AG04449 (cell line): ENCODE measurements at regions of chr6 and their contacts with region 1.

Region 1: GRCh38 chr6:71621918-71622519 is 264.3 kb upstream of the RIMS1 start:
- DNase-seq: no peak
- H3K4me3 ChIP-seq: no peak overlapping the region
- CTCF ChIP-seq: peak; percentile 6

Region 2: GRCh38 chr6:72084992-72085569 is 463.1 kb after region 1 on chr6:
- CTCF ChIA-PET with region 1: interaction called, 16 read pairs
- POLR2A ChIA-PET with region 1: no interaction called
- DNase-seq: no peak
- H3K4me3 ChIP-seq: no peak overlapping the region
- CTCF ChIP-seq: no peak